ENCODE measurements at regions of chr17 and their contacts with region 1.

Region 1: GRCh38 chr17:4908301-4908700 is 5.4 kb upstream of the CHRNE start:
- DNase-seq: no peak
- ATAC-seq: no peak
- H3K4me3 ChIP-seq: no peak overlapping the region
- H3K4me3 Mint-ChIP-seq: no peak overlapping the region
- H3K27ac ChIP-seq: no peak overlapping the region
- H3K27ac Mint-ChIP-seq: no peak overlapping the region
- H3K4me1 ChIP-seq: peaks cover 6 to 15% of the 10 kb centered on the region in 2 donors
- H3K4me1 Mint-ChIP-seq: peaks cover 4% of the 10 kb centered on the region
- H3K27me3 ChIP-seq: peaks cover 0 to 11% (median 1%) of the 10 kb centered on the region in 4 experiments
- H3K27me3 Mint-ChIP-seq: peaks cover 12% of the 10 kb centered on the region
- CTCF ChIP-seq: no peak

Region 2: DNA sequence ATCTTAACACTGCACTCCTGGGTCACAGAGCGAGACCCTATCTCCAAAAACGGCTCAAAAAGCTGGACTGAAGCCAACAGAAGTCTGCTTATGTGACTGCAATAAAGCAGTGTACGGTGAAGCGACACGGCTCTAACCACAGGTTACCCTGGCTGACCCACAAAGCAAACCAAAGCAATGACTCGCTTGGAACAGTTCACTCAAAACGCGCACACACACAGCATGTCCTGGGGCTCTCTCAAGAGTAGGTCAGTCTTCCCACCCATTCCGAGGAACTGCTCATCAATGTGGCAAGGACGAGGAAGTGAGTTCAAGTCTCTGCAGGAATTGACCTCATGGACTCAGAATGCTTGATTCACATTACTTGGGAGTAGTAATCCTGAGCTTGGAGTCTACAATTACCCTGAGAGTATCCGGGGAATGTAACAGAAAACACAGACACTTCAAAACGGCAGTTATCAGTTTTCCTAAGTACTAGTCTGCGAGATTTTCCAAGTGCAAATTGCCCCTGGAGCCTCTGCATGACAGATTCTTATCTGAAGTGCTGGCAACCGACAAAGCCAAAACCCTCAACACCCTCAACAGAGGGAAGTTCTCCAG is 229.8 kb before region 1 on chr17:
- CTCF ChIA-PET with region 1: no interaction called
- POLR2A ChIA-PET with region 1: no interaction called
- intact Hi-C with region 1: no loop called
- DNase-seq: no peak
- ATAC-seq: no peak
- H3K4me3 ChIP-seq: no peak overlapping the region
- H3K4me3 Mint-ChIP-seq: no peak overlapping the region
- H3K27ac ChIP-seq: no peak overlapping the region
- H3K27ac Mint-ChIP-seq: no peak overlapping the region
- H3K4me1 ChIP-seq: no peaks in the 10 kb centered on the region
- H3K4me1 Mint-ChIP-seq: no peaks in the 10 kb centered on the region
- H3K27me3 ChIP-seq: no peaks in the 10 kb centered on the region
- H3K27me3 Mint-ChIP-seq: no peaks in the 10 kb centered on the region
- CTCF ChIP-seq: no peak

Region 3: DNA sequence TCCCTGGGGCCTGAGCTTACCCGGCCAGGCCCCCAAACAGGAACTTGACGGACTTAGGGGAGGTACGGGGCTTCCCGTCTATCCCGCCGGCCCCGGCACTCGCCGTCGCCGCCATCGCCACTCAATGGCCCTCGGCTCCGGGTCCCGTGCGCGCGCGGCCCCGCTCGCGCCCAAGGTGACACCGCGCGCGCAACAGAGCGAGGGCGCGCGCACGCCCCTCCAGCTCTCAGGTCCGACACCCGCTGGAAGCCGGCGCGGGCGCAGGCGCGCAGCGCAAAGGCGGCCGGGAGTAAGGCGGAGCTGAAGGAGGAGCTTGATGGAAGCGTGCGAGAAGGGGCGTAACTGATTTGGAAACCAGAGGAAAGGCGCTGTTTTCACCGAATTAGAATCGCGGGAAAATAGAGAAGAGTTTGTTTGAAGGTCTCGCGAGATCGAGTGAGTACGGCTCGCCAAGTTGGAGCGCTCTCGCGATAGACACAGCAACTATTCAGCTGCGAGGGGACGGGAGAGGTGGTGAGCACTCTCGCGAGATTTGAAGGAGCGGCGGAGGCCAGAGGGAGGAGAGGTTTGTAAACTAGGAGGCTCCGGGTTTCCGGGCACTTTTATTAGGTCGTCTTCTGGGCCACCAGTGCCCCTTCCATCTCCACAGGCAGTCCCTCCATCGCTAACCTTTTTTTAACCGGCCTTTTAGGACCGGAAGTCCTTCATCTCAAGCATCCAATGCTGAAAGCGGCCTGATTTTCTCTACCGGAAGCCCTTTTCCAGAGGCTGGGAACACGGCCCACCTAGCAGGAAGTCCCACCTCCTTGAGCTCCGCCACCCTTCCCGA is 31.7 kb after region 1 on chr17 and contains the starts of genes RNF167 and SLC25A11:
- CTCF ChIA-PET with region 1: interaction called, 12 read pairs
- POLR2A ChIA-PET with region 1: interaction called, 6 read pairs
- intact Hi-C with region 1: loop called (anchors 2 kb)
- DNase-seq: peak; percentile 99
- ATAC-seq: peak; percentile 84
- H3K4me3 ChIP-seq: peak within 1 kb of the TSS; percentile 83 to 100 (median 86)
- H3K4me3 Mint-ChIP-seq: peak within 1 kb of the TSS; percentile 89
- H3K27ac ChIP-seq: peak within 1 kb of the TSS; percentile 84 to 87
- H3K27ac Mint-ChIP-seq: peak within 1 kb of the TSS; percentile 95
- H3K4me1 ChIP-seq: peaks cover 50 to 59% of the 10 kb centered on the region in 2 donors
- H3K4me1 Mint-ChIP-seq: peaks cover 58% of the 10 kb centered on the region
- H3K27me3 ChIP-seq: no peaks in the 10 kb centered on the region
- H3K27me3 Mint-ChIP-seq: no peaks in the 10 kb centered on the region
- CTCF ChIP-seq: no peak
- total RNA-seq, gene RNF167: 131 and 143 TPM in 2 replicates
- total RNA-seq, gene SLC25A11: 32.3 and 42.7 TPM in 2 replicates

Region 4: GRCh38 chr17:4956493-4957061 is 48.3 kb after region 1 on chr17:
- CTCF ChIA-PET with region 1: interaction called, 13 read pairs
- POLR2A ChIA-PET with region 1: interaction called, 3 read pairs
- intact Hi-C with region 1: no loop called
- DNase-seq: no peak
- ATAC-seq: no peak
- H3K4me3 ChIP-seq: no peak overlapping the region
- H3K4me3 Mint-ChIP-seq: no peak overlapping the region
- H3K27ac ChIP-seq: no peak overlapping the region
- H3K27ac Mint-ChIP-seq: no peak overlapping the region
- H3K4me1 ChIP-seq: no peaks in the 10 kb centered on the region
- H3K4me1 Mint-ChIP-seq: no peaks in the 10 kb centered on the region
- H3K27me3 ChIP-seq: no peaks in the 10 kb centered on the region
- H3K27me3 Mint-ChIP-seq: no peaks in the 10 kb centered on the region
- CTCF ChIP-seq: no peak

Region 5: GRCh38 chr17:4986951-4987766 is 78.9 kb after region 1 on chr17 and contains the start of gene CAMTA2:
- CTCF ChIA-PET with region 1: interaction called, 35 read pairs
- POLR2A ChIA-PET with region 1: interaction called, 8 read pairs
- intact Hi-C with region 1: loop called (anchors 1 kb)
- DNase-seq: peak; percentile 91
- ATAC-seq: peak; percentile 89
- H3K4me3 ChIP-seq: peak within 1 kb of the TSS; percentile 67 to 96 (median 81)
- H3K4me3 Mint-ChIP-seq: peak within 1 kb of the TSS; percentile 91
- H3K27ac ChIP-seq: peak within 1 kb of the TSS; percentile 84 to 90
- H3K27ac Mint-ChIP-seq: peak within 1 kb of the TSS; percentile 90
- H3K4me1 ChIP-seq: peaks cover 21 to 28% of the 10 kb centered on the region in 2 donors
- H3K4me1 Mint-ChIP-seq: peaks cover 35% of the 10 kb centered on the region
- H3K27me3 ChIP-seq: no peaks in the 10 kb centered on the region
- H3K27me3 Mint-ChIP-seq: no peaks in the 10 kb centered on the region
- CTCF ChIP-seq: peak; percentile 88
- total RNA-seq, gene CAMTA2: 57.6 and 57.9 TPM in 2 replicates

Region 6: GRCh38 chr17:5055543-5055942 is 147.2 kb after region 1 on chr17:
- CTCF ChIA-PET with region 1: interaction called, 39 read pairs
- POLR2A ChIA-PET with region 1: no interaction called
- intact Hi-C with region 1: no loop called
- DNase-seq: no peak
- ATAC-seq: no peak
- H3K4me3 ChIP-seq: no peak overlapping the region
- H3K4me3 Mint-ChIP-seq: no peak overlapping the region
- H3K27ac ChIP-seq: no peak overlapping the region
- H3K27ac Mint-ChIP-seq: no peak overlapping the region
- H3K4me1 ChIP-seq: peaks cover 0 to 8% of the 10 kb centered on the region in 2 donors
- H3K4me1 Mint-ChIP-seq: peaks cover 17% of the 10 kb centered on the region
- H3K27me3 ChIP-seq: peaks cover 0 to 5% (median 0%) of the 10 kb centered on the region in 4 experiments
- H3K27me3 Mint-ChIP-seq: no peaks in the 10 kb centered on the region
- CTCF ChIP-seq: no peak

Measured in B cell (primary cell).